ENCODE measurements at regions of chr9 and their contacts with region 1.

Region 1: GRCh38 chr9:5893591-5894236 is 3.0 kb downstream of the MLANA start:
- DNase-seq: no peak
- ATAC-seq: no peak
- H3K4me3 ChIP-seq: no peak overlapping the region
- H3K4me3 Mint-ChIP-seq: no peak overlapping the region
- H3K27ac ChIP-seq: no peak overlapping the region
- H3K27ac Mint-ChIP-seq: no peak overlapping the region
- H3K4me1 ChIP-seq: no peaks in the 10 kb centered on the region
- H3K4me1 Mint-ChIP-seq: no peaks in the 10 kb centered on the region
- H3K27me3 ChIP-seq: no peaks in the 10 kb centered on the region
- H3K27me3 Mint-ChIP-seq: no peaks in the 10 kb centered on the region

Region 2: DNA sequence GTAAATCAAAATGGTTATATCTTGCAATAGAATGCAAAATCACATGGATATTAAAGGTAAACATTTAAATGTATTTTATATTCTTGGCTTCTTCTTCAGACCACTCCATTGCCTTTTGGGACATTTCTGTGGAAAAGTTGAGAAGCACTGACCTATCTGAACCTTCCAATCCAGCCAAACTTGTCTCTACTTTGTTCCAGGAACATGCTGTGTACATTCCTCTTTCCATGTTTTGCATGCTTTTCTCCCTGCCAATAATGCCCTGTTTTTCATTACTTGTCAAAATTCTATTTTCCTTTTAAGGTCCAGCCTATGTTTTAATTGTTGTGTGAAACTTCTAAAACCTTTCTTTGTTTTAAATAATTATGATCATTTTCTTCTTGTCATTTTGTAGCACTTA is 880.3 kb before region 1 on chr9:
- CTCF ChIA-PET with region 1: no interaction called
- POLR2A ChIA-PET with region 1: interaction called in 1 of 2 experiments, 13 read pairs
- DNase-seq: no peak
- ATAC-seq: no peak
- H3K4me3 ChIP-seq: no peak overlapping the region
- H3K4me3 Mint-ChIP-seq: no peak overlapping the region
- H3K27ac ChIP-seq: no peak overlapping the region
- H3K27ac Mint-ChIP-seq: no peak overlapping the region
- H3K4me1 ChIP-seq: no peaks in the 10 kb centered on the region
- H3K4me1 Mint-ChIP-seq: peaks cover 12 to 31% (median 27%) of the 10 kb centered on the region in 3 donors
- H3K27me3 ChIP-seq: no peaks in the 10 kb centered on the region
- H3K27me3 Mint-ChIP-seq: no peaks in the 10 kb centered on the region

Region 3: DNA sequence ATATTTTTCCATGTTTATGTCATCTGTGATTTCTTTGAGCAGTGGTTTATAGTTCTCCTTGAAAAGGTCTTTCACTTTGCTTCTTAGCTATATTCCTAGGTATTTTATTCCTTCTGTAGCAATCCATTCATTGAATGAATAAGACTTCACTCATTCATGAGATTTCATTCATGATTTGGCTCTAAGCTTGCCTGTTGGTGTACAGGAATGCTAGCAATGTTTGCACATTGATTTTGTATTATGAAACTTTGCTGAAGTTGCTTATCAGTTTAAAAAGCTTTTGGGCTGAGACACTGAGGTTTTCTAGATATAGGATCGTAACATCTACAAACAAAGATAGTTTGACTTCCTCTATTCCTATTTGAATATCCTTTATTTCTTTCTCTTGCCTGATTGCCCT is 605.1 kb before region 1 on chr9:
- CTCF ChIA-PET with region 1: no interaction called
- POLR2A ChIA-PET with region 1: no interaction called
- DNase-seq: no peak
- ATAC-seq: no peak
- H3K4me3 ChIP-seq: no peak overlapping the region
- H3K4me3 Mint-ChIP-seq: no peak overlapping the region
- H3K27ac ChIP-seq: no peak overlapping the region
- H3K27ac Mint-ChIP-seq: no peak overlapping the region
- H3K4me1 ChIP-seq: no peaks in the 10 kb centered on the region
- H3K4me1 Mint-ChIP-seq: peaks cover 3 to 7% (median 5%) of the 10 kb centered on the region in 3 donors
- H3K27me3 ChIP-seq: peaks cover 0 to 5% of the 10 kb centered on the region in 2 experiments
- H3K27me3 Mint-ChIP-seq: peaks cover 3 to 6% of the 10 kb centered on the region in 2 donors

Region 4: DNA sequence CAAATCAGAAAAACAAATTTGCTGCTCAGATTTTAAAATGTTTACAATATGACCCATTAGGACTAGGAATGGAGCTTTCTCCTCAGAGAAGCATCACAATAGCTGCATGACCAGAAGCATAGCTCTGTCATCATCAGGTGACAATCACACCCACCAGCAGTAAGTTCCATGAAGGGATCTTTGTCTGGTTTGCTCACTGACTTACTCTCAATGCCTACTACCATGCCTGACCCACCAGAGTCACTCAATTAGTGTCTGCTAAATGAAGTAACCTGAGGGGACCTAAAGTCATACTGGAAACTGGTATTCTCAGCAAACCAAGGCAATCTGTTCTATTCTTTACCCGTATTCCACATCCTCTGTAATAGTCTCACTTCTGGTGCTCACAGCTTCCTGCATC is 68.5 kb before region 1 on chr9:
- CTCF ChIA-PET with region 1: no interaction called
- POLR2A ChIA-PET with region 1: no interaction called
- DNase-seq: no peak
- ATAC-seq: no peak
- H3K4me3 ChIP-seq: no peak overlapping the region
- H3K4me3 Mint-ChIP-seq: no peak overlapping the region
- H3K27ac ChIP-seq: no peak overlapping the region
- H3K27ac Mint-ChIP-seq: peak overlapping the region in 1 of 2 donors; percentile 8
- H3K4me1 ChIP-seq: peaks cover 0 to 5% of the 10 kb centered on the region in 2 experiments
- H3K4me1 Mint-ChIP-seq: peaks cover 20 to 39% (median 37%) of the 10 kb centered on the region in 3 donors
- H3K27me3 ChIP-seq: no peaks in the 10 kb centered on the region
- H3K27me3 Mint-ChIP-seq: no peaks in the 10 kb centered on the region

Region 5: DNA sequence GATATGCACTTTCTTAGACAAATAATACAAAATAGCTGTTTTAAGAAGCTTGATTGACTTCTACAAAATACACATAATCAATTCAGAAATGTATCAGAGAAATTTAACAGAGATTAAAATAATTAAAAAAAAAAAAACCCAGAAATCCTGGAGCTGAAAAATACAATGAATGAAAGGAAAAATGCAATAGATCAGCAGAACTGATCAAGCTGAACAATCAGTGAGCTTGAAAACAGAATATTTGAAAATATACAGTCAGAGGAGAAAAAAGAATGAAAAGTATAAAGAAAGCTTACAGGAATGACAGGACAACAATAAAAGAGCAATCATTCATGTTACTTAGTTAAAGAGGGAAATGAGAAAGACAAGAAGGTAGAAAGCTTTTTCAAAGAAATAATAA is 280.2 kb after region 1 on chr9:
- CTCF ChIA-PET with region 1: no interaction called
- POLR2A ChIA-PET with region 1: interaction called in 1 of 2 experiments, 11 read pairs
- DNase-seq: no peak
- ATAC-seq: no peak
- H3K4me3 ChIP-seq: no peak overlapping the region
- H3K4me3 Mint-ChIP-seq: no peak overlapping the region
- H3K27ac ChIP-seq: no peak overlapping the region
- H3K27ac Mint-ChIP-seq: no peak overlapping the region
- H3K4me1 ChIP-seq: no peaks in the 10 kb centered on the region
- H3K4me1 Mint-ChIP-seq: no peaks in the 10 kb centered on the region
- H3K27me3 ChIP-seq: peaks cover 0 to 5% of the 10 kb centered on the region in 2 experiments
- H3K27me3 Mint-ChIP-seq: peaks cover 1 to 4% of the 10 kb centered on the region in 2 donors